ENCODE measurements at regions of chr9 and their contacts with region 1.

Region 1: GRCh38 chr9:96317335-96317980 is 15.5 kb upstream of the HSD17B3 start:
- DNase-seq: peak; percentile 58
- ATAC-seq: peak; percentile 47
- H3K4me3 ChIP-seq: no peak overlapping the region
- H3K4me3 Mint-ChIP-seq: no peak overlapping the region
- H3K27ac ChIP-seq: no peak overlapping the region
- H3K27ac Mint-ChIP-seq: no peak overlapping the region
- H3K4me1 ChIP-seq: no peaks in the 10 kb centered on the region
- H3K4me1 Mint-ChIP-seq: no peaks in the 10 kb centered on the region
- H3K27me3 ChIP-seq: peaks cover 0 to 10% (median 1%) of the 10 kb centered on the region in 4 experiments
- H3K27me3 Mint-ChIP-seq: peaks cover 4% of the 10 kb centered on the region
- CTCF ChIP-seq: peak; percentile 83

Region 2: DNA sequence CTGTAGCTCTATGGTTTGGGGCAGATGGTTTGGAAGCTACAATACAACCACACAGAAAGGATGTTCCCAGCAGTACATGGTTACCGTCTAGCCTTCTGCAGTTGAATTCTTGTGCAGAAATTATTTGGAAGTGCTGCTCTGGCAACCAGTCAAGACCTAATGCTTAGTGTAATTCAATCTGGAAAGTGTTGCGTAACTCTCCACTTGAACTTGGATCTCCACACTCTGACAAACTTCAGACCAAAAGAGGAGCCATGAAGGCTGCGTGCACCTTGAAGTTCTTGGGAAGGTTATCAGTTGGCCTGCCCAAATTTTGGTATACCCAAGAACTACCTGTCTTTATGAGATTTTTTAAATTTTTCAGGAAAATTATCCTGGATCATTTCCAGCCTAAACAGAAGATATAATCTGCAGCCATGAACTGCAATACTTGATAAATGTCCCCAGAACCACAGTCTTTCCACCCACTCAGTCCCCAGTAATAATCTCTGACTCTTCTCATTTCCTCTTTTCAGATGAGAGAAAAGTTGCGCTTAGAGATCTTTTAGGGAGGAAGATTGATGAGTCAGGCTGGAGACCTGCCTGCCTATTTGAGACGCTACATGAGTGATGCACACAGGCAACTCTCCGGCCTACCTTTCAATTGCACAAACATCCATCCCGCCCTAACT is 1159.8 kb before region 1 on chr9:
- CTCF ChIA-PET with region 1: no interaction called
- POLR2A ChIA-PET with region 1: interaction called, 12 read pairs
- intact Hi-C with region 1: no loop called
- DNase-seq: no peak
- ATAC-seq: no peak
- H3K4me3 ChIP-seq: no peak overlapping the region
- H3K4me3 Mint-ChIP-seq: no peak overlapping the region
- H3K27ac ChIP-seq: no peak overlapping the region
- H3K27ac Mint-ChIP-seq: no peak overlapping the region
- H3K4me1 ChIP-seq: no peaks in the 10 kb centered on the region
- H3K4me1 Mint-ChIP-seq: peaks cover 2% of the 10 kb centered on the region
- H3K27me3 ChIP-seq: no peaks in the 10 kb centered on the region
- H3K27me3 Mint-ChIP-seq: no peaks in the 10 kb centered on the region
- CTCF ChIP-seq: no peak

Region 3: DNA sequence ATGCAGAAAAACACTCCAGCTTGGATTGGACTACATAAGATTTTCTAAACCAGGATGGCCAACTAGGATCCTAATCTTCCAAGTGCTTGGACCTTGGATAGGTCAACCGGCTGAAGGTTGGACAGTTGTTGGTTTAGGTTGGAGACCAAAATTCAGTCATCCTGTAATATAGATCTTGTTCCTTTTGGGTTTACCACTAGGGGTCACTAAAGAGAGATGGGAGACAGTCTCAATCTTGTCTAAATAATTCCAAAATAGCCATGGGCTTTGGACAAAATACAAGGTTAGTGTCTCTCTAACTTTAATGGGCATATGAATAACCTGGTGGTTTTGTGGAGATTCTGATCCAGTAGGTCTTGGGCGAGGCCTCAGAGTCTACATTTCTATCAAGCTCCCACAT is 590.7 kb before region 1 on chr9:
- CTCF ChIA-PET with region 1: interaction called, 3 read pairs
- POLR2A ChIA-PET with region 1: no interaction called
- intact Hi-C with region 1: loop called (anchors 5 kb)
- DNase-seq: peak; percentile 11
- ATAC-seq: no peak
- H3K4me3 ChIP-seq: no peak overlapping the region
- H3K4me3 Mint-ChIP-seq: no peak overlapping the region
- H3K27ac ChIP-seq: no peak overlapping the region
- H3K27ac Mint-ChIP-seq: no peak overlapping the region
- H3K4me1 ChIP-seq: peaks cover 8 to 14% of the 10 kb centered on the region in 2 donors
- H3K4me1 Mint-ChIP-seq: peaks cover 13% of the 10 kb centered on the region
- H3K27me3 ChIP-seq: no peaks in the 10 kb centered on the region
- H3K27me3 Mint-ChIP-seq: peaks cover 4% of the 10 kb centered on the region
- CTCF ChIP-seq: peak; percentile 51

Region 4: DNA sequence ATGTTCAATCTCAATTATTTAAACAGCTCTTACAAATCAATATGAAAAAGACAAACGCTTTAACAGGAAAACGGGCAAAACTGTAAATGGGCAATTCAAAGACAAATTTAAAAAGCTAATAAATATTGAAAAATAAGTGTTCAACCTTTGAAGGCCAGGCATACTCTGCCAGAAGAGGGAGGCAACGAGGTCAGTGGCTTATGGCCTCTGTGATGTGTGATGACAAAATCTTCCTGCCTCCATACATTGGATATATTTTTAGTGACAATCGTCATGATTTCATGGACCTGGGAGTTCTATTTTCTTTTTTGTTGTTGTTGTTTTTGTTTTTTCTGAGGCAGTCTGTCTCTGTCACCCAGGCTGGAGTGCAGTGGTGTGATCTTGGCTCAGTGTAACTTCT is 573.1 kb before region 1 on chr9:
- CTCF ChIA-PET with region 1: no interaction called
- POLR2A ChIA-PET with region 1: no interaction called
- intact Hi-C with region 1: no loop called
- DNase-seq: no peak
- ATAC-seq: no peak
- H3K4me3 ChIP-seq: no peak overlapping the region
- H3K4me3 Mint-ChIP-seq: no peak overlapping the region
- H3K27ac ChIP-seq: no peak overlapping the region
- H3K27ac Mint-ChIP-seq: no peak overlapping the region
- H3K4me1 ChIP-seq: no peaks in the 10 kb centered on the region
- H3K4me1 Mint-ChIP-seq: no peaks in the 10 kb centered on the region
- H3K27me3 ChIP-seq: no peaks in the 10 kb centered on the region
- H3K27me3 Mint-ChIP-seq: peaks cover 10% of the 10 kb centered on the region
- CTCF ChIP-seq: no peak

Measured in B cell (primary cell).